ENCODE measurements at regions of chr3 and their contacts with region 1.

Region 1: DNA sequence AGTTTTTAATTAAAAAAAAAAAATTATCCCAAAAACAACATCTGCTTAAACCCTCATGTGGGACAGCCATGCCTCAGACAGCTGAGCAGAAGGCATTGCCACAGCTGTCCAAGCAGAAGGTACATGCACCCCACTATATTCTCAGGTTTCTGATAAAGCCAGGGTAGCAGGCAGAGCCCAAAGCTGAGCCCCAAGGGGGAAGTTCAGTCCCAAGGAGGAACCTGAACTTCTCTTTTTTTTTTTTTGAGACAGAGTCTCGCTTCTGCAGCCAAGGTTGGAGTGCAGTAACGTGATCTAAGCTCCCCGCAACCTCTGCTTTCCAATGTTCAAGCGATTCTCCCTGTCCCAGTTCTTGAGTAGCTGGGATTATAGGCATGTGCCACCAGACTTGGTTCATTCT is 33.2 kb downstream of the MKRN2 start:
- DNase-seq: no peak
- ATAC-seq: no peak
- H3K4me3 Mint-ChIP-seq: no peak overlapping the region
- H3K27ac Mint-ChIP-seq: no peak overlapping the region
- H3K4me1 Mint-ChIP-seq: no peaks in the 10 kb centered on the region
- H3K27me3 Mint-ChIP-seq: no peaks in the 10 kb centered on the region

Region 2: GRCh38 chr3:12629560-12629959 is 39.5 kb after region 1 on chr3:
- CTCF ChIA-PET with region 1: no interaction called
- POLR2A ChIA-PET with region 1: interaction called, 10 read pairs
- intact Hi-C with region 1: no loop called
- DNase-seq: no peak
- ATAC-seq: no peak
- H3K4me3 Mint-ChIP-seq: no peak overlapping the region
- H3K27ac Mint-ChIP-seq: no peak overlapping the region
- H3K4me1 Mint-ChIP-seq: peaks cover 56% of the 10 kb centered on the region
- H3K27me3 Mint-ChIP-seq: no peaks in the 10 kb centered on the region